Ovary (tissue), 10 donors: ENCODE measurements at regions of chr9 and their contacts with region 1.

Region 1: GRCh38 chr9:31554941-31555340 is 829.5 kb upstream of the ACO1 start:
- DNase-seq: no peak
- H3K4me3 ChIP-seq: no peak overlapping the region
- H3K27ac ChIP-seq: no peak overlapping the region
- H3K4me1 ChIP-seq: no peaks in the 10 kb centered on the region
- H3K27me3 ChIP-seq: no peaks in the 10 kb centered on the region
- CTCF ChIP-seq: no peak
- EP300 ChIP-seq: no peak
- POLR2A ChIP-seq: no peak

Region 2: GRCh38 chr9:31535651-31536050 is 19.3 kb before region 1 on chr9:
- intact Hi-C with region 1: loop called in 1 of 4 experiments (anchors 1 kb)
- DNase-seq: no peak
- H3K4me3 ChIP-seq: no peak overlapping the region
- H3K27ac ChIP-seq: no peak overlapping the region
- H3K4me1 ChIP-seq: no peaks in the 10 kb centered on the region
- H3K27me3 ChIP-seq: no peaks in the 10 kb centered on the region
- CTCF ChIP-seq: no peak
- EP300 ChIP-seq: no peak
- POLR2A ChIP-seq: no peak

Region 3: DNA sequence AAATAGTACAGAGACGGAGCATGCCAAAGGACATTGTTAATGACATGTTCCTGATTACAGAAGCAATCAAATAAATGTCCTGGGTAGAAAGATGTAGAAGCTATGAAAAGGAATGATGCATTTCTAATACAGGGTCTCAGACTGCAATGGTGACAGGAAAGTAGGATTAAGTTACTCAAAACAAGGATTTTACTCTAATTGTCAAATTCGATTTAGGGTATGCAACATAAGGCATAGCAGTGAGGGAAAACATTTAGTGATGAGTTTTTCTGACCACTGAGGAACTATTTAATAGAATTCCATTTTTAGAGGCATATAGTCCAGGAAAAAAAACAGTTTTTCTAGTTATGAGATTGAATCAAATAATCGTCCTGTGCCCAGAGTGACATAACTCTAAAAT is 114.4 kb after region 1 on chr9:
- intact Hi-C with region 1: no loop called
- DNase-seq: no peak
- H3K4me3 ChIP-seq: no peak overlapping the region
- H3K27ac ChIP-seq: no peak overlapping the region
- H3K4me1 ChIP-seq: no peaks in the 10 kb centered on the region
- H3K27me3 ChIP-seq: no peaks in the 10 kb centered on the region
- CTCF ChIP-seq: no peak
- EP300 ChIP-seq: no peak
- POLR2A ChIP-seq: no peak

Region 4: GRCh38 chr9:31700252-31701045 is 145.5 kb after region 1 on chr9:
- intact Hi-C with region 1: no loop called
- DNase-seq: no peak
- H3K4me3 ChIP-seq: no peak overlapping the region
- H3K27ac ChIP-seq: no peak overlapping the region
- H3K4me1 ChIP-seq: no peaks in the 10 kb centered on the region
- H3K27me3 ChIP-seq: no peaks in the 10 kb centered on the region
- CTCF ChIP-seq: no peak
- EP300 ChIP-seq: no peak
- POLR2A ChIP-seq: no peak